CD8-positive, alpha-beta T cell (primary cell): ENCODE measurements at regions of chr13 and their contacts with region 1.

Region 1: DNA sequence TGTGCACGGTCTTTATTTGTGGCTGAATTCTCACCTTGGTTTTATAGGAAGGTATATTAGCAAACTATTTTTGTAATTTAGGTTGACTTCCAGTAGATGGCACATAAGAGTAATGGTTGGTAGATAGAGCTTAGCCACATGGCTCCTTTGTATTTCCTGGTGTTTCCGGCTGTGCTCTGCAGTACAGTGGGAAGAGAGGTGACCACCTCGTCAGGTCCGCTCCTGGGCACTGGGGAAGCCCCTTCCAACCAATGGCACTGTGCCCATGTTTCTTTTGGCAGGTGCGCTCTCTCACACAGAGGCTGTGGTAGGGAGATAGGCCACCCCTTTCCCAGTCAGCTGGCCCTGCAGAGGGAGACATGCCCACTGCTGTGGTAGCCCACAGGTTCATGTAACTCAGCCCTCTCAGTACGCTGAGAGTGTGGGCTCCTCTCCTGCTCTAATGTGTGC is 74.3 kb upstream of the ATP12A start:
- DNase-seq: peak in 3 of 9 experiments; percentile 13 to 71 (median 54)
- ATAC-seq: peak; percentile 77
- H3K4me3 ChIP-seq: no peak overlapping the region
- H3K4me3 Mint-ChIP-seq: no peak overlapping the region
- H3K27ac ChIP-seq: no peak overlapping the region
- H3K27ac Mint-ChIP-seq: no peak overlapping the region
- H3K4me1 ChIP-seq: peaks cover 5% of the 10 kb centered on the region
- H3K4me1 Mint-ChIP-seq: peaks cover 6% of the 10 kb centered on the region
- H3K27me3 ChIP-seq: no peaks in the 10 kb centered on the region
- H3K27me3 Mint-ChIP-seq: no peaks in the 10 kb centered on the region
- CTCF ChIP-seq: peak; percentile 42

Region 2: DNA sequence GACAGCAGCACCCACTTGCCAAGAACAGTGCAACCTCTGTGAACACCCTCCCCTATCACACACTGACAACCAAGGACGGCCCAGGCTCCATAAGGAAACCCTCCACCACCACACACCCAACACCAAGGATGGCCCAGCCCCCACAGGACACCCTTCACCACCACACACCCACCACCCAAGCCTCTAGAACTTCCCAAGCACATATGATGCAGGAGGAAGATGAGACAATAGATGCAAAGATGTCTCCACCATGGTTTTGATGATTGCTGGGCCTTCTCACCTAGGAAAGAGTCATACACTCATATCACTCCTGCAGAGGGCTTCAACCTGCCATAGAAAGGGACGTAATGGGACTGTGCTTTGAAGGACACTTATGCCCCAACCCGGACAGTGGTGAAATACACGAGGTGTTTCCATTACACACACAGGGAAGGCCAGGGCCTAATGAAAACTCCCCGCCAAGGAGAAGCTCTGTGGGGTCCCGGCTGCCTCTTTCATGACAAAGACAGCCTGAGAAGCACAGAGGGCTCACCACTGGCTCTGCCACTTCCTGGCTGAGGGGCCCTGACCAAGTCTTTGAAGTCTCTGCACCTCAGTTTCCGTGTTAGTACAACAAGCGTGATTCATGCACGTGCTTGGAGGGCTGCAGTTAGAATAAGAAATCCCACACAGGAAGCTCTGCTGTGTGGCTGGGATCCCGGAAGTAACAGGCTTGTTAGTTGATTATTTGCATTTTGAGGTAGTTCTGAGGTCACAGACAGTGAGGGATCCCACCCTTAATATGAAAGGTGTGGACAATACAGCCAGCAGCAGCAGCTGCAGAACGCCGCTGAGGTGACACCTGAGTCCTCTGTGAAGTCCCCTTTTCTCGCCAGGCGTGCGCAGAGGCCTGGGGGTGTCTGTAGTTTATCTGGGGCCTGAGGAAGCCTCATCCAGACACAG is 12.3 kb after region 1 on chr13:
- CTCF ChIA-PET with region 1: interaction called, 12 read pairs
- POLR2A ChIA-PET with region 1: no interaction called
- intact Hi-C with region 1: no loop called
- DNase-seq: peak; percentile 26 to 95 (median 72)
- ATAC-seq: peak; percentile 84
- H3K4me3 ChIP-seq: no peak overlapping the region
- H3K4me3 Mint-ChIP-seq: peak overlapping the region; percentile 4
- H3K27ac ChIP-seq: peak overlapping the region; percentile 54 to 77
- H3K27ac Mint-ChIP-seq: peak overlapping the region; percentile 91
- H3K4me1 ChIP-seq: peaks cover 28% of the 10 kb centered on the region
- H3K4me1 Mint-ChIP-seq: peaks cover 36% of the 10 kb centered on the region
- H3K27me3 ChIP-seq: no peaks in the 10 kb centered on the region
- H3K27me3 Mint-ChIP-seq: no peaks in the 10 kb centered on the region
- CTCF ChIP-seq: no peak

Region 3: DNA sequence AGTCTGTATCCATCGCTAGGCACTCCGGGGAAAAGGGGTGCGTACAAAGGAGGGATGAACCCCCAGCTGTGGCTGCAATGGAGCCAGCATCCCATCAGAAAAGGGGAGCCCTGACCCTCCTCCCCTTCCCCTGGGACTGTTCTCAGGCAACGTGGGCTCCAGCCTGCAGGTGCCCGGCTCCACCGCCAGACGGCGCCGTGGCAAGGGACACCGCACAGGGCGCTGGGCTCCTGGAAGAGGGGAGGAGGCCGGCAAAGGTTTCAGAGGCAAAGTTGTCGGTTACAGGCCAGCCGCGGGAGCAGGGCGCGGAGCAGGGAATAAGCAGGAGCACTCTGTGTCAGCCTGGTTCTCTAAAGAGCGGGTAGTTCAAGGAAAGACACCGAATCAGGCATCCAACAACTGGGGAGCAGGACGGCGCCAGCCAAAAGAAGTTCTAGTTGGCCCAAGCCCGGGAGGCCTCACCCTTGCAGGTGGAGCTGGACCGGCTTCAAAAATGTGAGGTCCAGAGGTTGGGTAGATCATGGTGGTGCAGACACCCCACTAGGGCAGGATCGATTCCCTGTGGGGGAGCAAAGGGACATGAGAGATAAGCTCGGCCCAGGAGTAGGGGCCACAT is 21.3 kb after region 1 on chr13:
- CTCF ChIA-PET with region 1: interaction called, 14 read pairs
- POLR2A ChIA-PET with region 1: no interaction called
- intact Hi-C with region 1: loop called in 1 of 2 experiments (anchors 2 kb)
- DNase-seq: no peak
- ATAC-seq: no peak
- H3K4me3 ChIP-seq: no peak overlapping the region
- H3K4me3 Mint-ChIP-seq: no peak overlapping the region
- H3K27ac ChIP-seq: peak overlapping the region in 1 of 2 experiments; percentile 78
- H3K27ac Mint-ChIP-seq: no peak overlapping the region
- H3K4me1 ChIP-seq: peaks cover 25% of the 10 kb centered on the region
- H3K4me1 Mint-ChIP-seq: peaks cover 35% of the 10 kb centered on the region
- H3K27me3 ChIP-seq: no peaks in the 10 kb centered on the region
- H3K27me3 Mint-ChIP-seq: no peaks in the 10 kb centered on the region
- CTCF ChIP-seq: no peak

Region 4: DNA sequence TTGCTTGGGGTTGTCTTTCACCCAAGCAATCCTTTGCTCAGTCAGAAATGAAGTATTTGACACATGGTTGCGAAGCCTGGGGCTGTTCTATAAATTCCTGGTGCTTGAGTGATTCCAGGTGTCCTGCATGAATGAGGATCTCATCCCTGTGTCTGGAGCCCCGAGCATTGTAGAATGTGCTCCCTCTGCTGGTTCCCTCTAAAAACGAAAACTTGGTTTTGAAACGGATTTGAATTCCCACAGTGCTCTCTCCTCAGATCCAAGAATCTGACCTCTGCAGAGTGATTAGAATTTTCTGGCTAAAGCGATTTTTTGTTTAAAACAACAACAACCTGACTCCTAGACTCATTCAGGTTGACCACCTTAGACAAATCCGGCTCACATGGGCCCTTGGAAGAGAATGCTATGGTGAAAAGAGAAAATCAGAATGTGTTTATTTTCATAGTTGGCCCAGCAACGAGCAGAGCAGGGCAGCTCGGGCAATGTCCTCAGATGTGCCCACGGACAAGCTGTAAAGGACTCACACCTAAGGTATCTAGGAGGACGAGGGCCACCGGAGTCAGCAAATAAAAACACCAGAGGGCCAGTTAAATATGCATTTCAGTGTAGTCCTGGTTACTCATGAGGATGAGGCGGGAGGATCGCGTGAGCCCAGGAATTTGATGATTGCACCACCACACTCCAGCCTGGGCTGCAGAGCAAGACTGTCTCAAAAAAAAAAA is 65.6 kb after region 1 on chr13:
- CTCF ChIA-PET with region 1: interaction called, 32 read pairs
- POLR2A ChIA-PET with region 1: interaction called, 3 read pairs
- intact Hi-C with region 1: loop called in 1 of 2 experiments (anchors 1 kb)
- DNase-seq: peak in 3 of 9 experiments; percentile 14 to 60 (median 45)
- ATAC-seq: peak; percentile 31
- H3K4me3 ChIP-seq: peak overlapping the region in 1 of 2 experiments; percentile 6
- H3K4me3 Mint-ChIP-seq: no peak overlapping the region
- H3K27ac ChIP-seq: no peak overlapping the region
- H3K27ac Mint-ChIP-seq: no peak overlapping the region
- H3K4me1 ChIP-seq: peaks cover 5% of the 10 kb centered on the region
- H3K4me1 Mint-ChIP-seq: peaks cover 6% of the 10 kb centered on the region
- H3K27me3 ChIP-seq: peaks cover 0 to 3% of the 10 kb centered on the region in 2 experiments
- H3K27me3 Mint-ChIP-seq: peaks cover 7% of the 10 kb centered on the region
- CTCF ChIP-seq: peak; percentile 34

Region 5: DNA sequence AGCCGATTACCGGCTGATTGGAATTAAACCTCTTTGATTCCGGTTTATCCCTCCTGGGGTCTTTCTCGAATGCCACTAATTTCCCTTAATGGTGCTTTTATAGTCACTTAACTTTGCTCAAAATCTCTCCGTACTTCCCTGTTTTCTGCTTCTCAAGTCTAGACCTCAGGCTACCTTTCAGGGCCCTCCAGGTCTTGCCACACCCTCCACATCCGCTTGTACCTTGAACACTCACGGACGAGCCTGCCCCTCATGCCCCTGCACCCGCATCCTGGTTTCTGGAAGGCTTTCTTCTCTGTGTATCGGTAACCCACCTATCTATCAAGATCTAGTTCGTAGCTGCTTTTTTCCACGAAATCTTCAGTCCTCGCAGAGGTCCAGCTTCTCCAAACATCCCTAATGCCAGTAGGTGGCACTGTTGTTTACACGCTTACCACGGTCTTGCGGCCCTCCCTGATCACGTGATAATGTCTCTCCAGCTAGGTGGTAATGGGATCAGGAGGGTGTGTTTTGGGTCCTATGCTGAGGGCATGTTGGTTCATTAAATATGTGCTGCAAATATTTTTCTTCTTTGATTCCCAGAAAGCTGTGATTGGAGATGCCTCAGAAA is 88.0 kb after region 1 on chr13:
- CTCF ChIA-PET with region 1: interaction called, 13 read pairs
- POLR2A ChIA-PET with region 1: no interaction called
- intact Hi-C with region 1: no loop called
- DNase-seq: peak in 4 of 9 experiments; percentile 23 to 75 (median 46)
- ATAC-seq: peak; percentile 49
- H3K4me3 ChIP-seq: no peak overlapping the region
- H3K4me3 Mint-ChIP-seq: no peak overlapping the region
- H3K27ac ChIP-seq: no peak overlapping the region
- H3K27ac Mint-ChIP-seq: no peak overlapping the region
- H3K4me1 ChIP-seq: peaks cover 6% of the 10 kb centered on the region
- H3K4me1 Mint-ChIP-seq: peaks cover 6% of the 10 kb centered on the region
- H3K27me3 ChIP-seq: no peaks in the 10 kb centered on the region
- H3K27me3 Mint-ChIP-seq: peaks cover 29% of the 10 kb centered on the region
- CTCF ChIP-seq: peak; percentile 54

Region 6: GRCh38 chr13:25384752-25385441 is 778.9 kb after region 1 on chr13:
- CTCF ChIA-PET with region 1: no interaction called
- POLR2A ChIA-PET with region 1: no interaction called
- intact Hi-C with region 1: no loop called
- DNase-seq: no peak
- ATAC-seq: no peak
- H3K4me3 ChIP-seq: no peak overlapping the region
- H3K4me3 Mint-ChIP-seq: no peak overlapping the region
- H3K27ac ChIP-seq: no peak overlapping the region
- H3K27ac Mint-ChIP-seq: no peak overlapping the region
- H3K4me1 ChIP-seq: no peaks in the 10 kb centered on the region
- H3K4me1 Mint-ChIP-seq: no peaks in the 10 kb centered on the region
- H3K27me3 ChIP-seq: peaks cover 0 to 2% of the 10 kb centered on the region in 2 experiments
- H3K27me3 Mint-ChIP-seq: peaks cover 38% of the 10 kb centered on the region
- CTCF ChIP-seq: no peak